Activated CD8-positive, alpha-beta T cell treated with anti-CD3 and anti-CD28 coated beads, Interleukin-2, amount 10 ng/mL, durations not matched to agents 7 days and 5 days (primary cell): ENCODE measurements at regions of chr12 and their contacts with region 1.

Region 1: GRCh38 chr12:14239350-14239934 is 126.0 kb upstream of the ATF7IP start:
- DNase-seq: peak; percentile 51
- ATAC-seq: peak; percentile 74
- H3K4me3 Mint-ChIP-seq: peak overlapping the region; percentile 50
- H3K27ac Mint-ChIP-seq: peak overlapping the region; percentile 62
- H3K4me1 Mint-ChIP-seq: peaks cover 22% of the 10 kb centered on the region
- H3K27me3 Mint-ChIP-seq: no peaks in the 10 kb centered on the region

Region 2: GRCh38 chr12:14257734-14258574 is 18.5 kb after region 1 on chr12:
- CTCF ChIA-PET with region 1: interaction called, 25 read pairs
- POLR2A ChIA-PET with region 1: interaction called, 6 read pairs
- DNase-seq: peak; percentile 87
- ATAC-seq: peak; percentile 67
- H3K4me3 Mint-ChIP-seq: peak overlapping the region; percentile 29
- H3K27ac Mint-ChIP-seq: peak overlapping the region; percentile 99
- H3K4me1 Mint-ChIP-seq: peaks cover 54% of the 10 kb centered on the region
- H3K27me3 Mint-ChIP-seq: no peaks in the 10 kb centered on the region

Region 3: GRCh38 chr12:14272956-14273907 is 33.8 kb after region 1 on chr12:
- CTCF ChIA-PET with region 1: no interaction called
- POLR2A ChIA-PET with region 1: no interaction called
- DNase-seq: no peak
- ATAC-seq: no peak
- H3K4me3 Mint-ChIP-seq: no peak overlapping the region
- H3K27ac Mint-ChIP-seq: no peak overlapping the region
- H3K4me1 Mint-ChIP-seq: peaks cover 26% of the 10 kb centered on the region
- H3K27me3 Mint-ChIP-seq: no peaks in the 10 kb centered on the region

Region 4: GRCh38 chr12:14365294-14366208 is 126.1 kb after region 1 on chr12 and contains the start of gene ATF7IP:
- CTCF ChIA-PET with region 1: interaction called, 58 read pairs
- POLR2A ChIA-PET with region 1: interaction called, 21 read pairs
- DNase-seq: peak; percentile 98
- ATAC-seq: peak; percentile 89
- H3K4me3 Mint-ChIP-seq: peak within 1 kb of the TSS; percentile 82
- H3K27ac Mint-ChIP-seq: peak within 1 kb of the TSS; percentile 96
- H3K4me1 Mint-ChIP-seq: peaks cover 28% of the 10 kb centered on the region
- H3K27me3 Mint-ChIP-seq: no peaks in the 10 kb centered on the region
- total RNA-seq, gene ATF7IP: 99.8 to 104 TPM

Region 5: GRCh38 chr12:14417715-14418114 is 178.3 kb after region 1 on chr12:
- CTCF ChIA-PET with region 1: interaction called, 21 read pairs
- POLR2A ChIA-PET with region 1: interaction called, 3 read pairs
- DNase-seq: peak; percentile 85
- ATAC-seq: peak; percentile 76
- H3K4me3 Mint-ChIP-seq: peak overlapping the region; percentile 72
- H3K27ac Mint-ChIP-seq: peak overlapping the region; percentile 91
- H3K4me1 Mint-ChIP-seq: peaks cover 60% of the 10 kb centered on the region
- H3K27me3 Mint-ChIP-seq: no peaks in the 10 kb centered on the region

Region 6: GRCh38 chr12:14618983-14619382 is 379.5 kb after region 1 on chr12:
- CTCF ChIA-PET with region 1: interaction called, 17 read pairs
- POLR2A ChIA-PET with region 1: no interaction called
- DNase-seq: no peak
- ATAC-seq: no peak
- H3K4me3 Mint-ChIP-seq: no peak overlapping the region
- H3K27ac Mint-ChIP-seq: no peak overlapping the region
- H3K4me1 Mint-ChIP-seq: no peaks in the 10 kb centered on the region
- H3K27me3 Mint-ChIP-seq: peaks cover 3% of the 10 kb centered on the region